Breast epithelium (tissue), 4 donors: ENCODE measurements at regions of chr12 and their contacts with region 1.

Region 1: GRCh38 chr12:129257524-129257923 is 404.2 kb downstream of the GLT1D1 start:
- DNase-seq: no peak
- H3K4me3 ChIP-seq: no peak overlapping the region
- H3K27ac ChIP-seq: no peak overlapping the region
- H3K4me1 ChIP-seq: no peaks in the 10 kb centered on the region
- H3K27me3 ChIP-seq: no peaks in the 10 kb centered on the region
- CTCF ChIP-seq: no peak
- POLR2A ChIP-seq: no peak

Region 2: GRCh38 chr12:127857661-127858060 is 1399.9 kb before region 1 on chr12:
- intact Hi-C with region 1: loop called (anchors 5 kb)
- DNase-seq: no peak
- H3K4me3 ChIP-seq: no peak overlapping the region
- H3K27ac ChIP-seq: no peak overlapping the region
- H3K4me1 ChIP-seq: no peaks in the 10 kb centered on the region
- H3K27me3 ChIP-seq: no peaks in the 10 kb centered on the region
- CTCF ChIP-seq: no peak
- POLR2A ChIP-seq: no peak

Region 3: GRCh38 chr12:129997239-129997638 is 739.7 kb after region 1 on chr12:
- intact Hi-C with region 1: loop called (anchors 5 kb)
- DNase-seq: no peak
- H3K4me3 ChIP-seq: no peak overlapping the region
- H3K27ac ChIP-seq: no peak overlapping the region
- H3K4me1 ChIP-seq: no peaks in the 10 kb centered on the region
- H3K27me3 ChIP-seq: no peaks in the 10 kb centered on the region
- CTCF ChIP-seq: no peak
- POLR2A ChIP-seq: no peak